Activated B cell treated with CpG ODN at 0.5 μM for 24 hours (primary cell): ENCODE measurements at regions of chr15 and their contacts with region 1.

Region 1: DNA sequence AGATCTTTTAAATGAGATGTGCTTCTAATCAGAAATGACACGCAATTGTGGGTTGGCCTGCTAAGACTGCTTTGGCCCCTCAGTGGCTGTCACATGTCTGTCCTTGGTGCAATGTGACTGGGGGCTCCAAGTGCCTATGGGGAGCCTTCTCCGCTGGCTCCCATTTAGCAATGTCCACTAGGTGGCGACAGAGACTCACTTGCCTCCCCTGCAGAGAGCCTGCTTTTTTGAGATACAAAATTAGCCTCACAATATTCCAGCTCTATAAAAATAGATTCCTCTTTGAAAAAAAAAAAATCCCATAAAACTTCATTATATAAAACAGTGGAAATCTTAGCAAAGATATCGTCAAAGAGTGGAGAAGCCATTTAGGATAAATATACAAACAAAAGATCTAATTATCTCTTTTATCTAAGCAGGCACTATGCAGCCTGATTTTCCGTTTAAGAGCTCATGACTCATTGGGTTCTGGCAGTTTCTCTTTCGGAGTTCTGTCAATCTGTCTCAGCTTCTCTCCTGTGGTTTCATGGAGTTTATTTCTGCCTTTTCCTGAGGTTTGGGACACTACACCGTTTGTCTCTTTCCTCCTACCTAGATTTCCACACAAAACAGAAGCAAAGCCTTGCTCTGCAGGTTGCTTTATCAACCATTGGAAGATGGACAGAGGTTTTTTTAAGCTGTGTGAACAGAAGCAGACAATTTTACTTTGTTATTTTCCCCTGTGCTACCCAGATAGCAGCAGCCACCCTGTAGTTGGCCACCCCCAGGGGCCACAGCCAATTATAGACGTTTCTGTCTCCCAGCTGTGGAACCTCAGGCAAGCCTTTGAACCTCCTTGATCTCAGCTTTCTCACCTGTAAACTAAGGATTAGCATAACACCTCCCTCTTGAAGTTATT is 68.4 kb upstream of the TNFAIP8L3 start:
- DNase-seq: peak; percentile 29
- ATAC-seq: peak; percentile 67
- H3K4me3 Mint-ChIP-seq: no peak overlapping the region
- H3K27ac Mint-ChIP-seq: no peak overlapping the region
- H3K4me1 Mint-ChIP-seq: peaks cover 4% of the 10 kb centered on the region
- H3K27me3 Mint-ChIP-seq: peaks cover 9% of the 10 kb centered on the region
- CTCF ChIP-seq: peak; percentile 89

Region 2: GRCh38 chr15:50496692-50497091 is 666.4 kb before region 1 on chr15:
- CTCF ChIA-PET with region 1: no interaction called
- POLR2A ChIA-PET with region 1: no interaction called
- intact Hi-C with region 1: no loop called
- DNase-seq: no peak
- ATAC-seq: no peak
- H3K4me3 Mint-ChIP-seq: no peak overlapping the region
- H3K27ac Mint-ChIP-seq: no peak overlapping the region
- H3K4me1 Mint-ChIP-seq: peaks cover 13% of the 10 kb centered on the region
- H3K27me3 Mint-ChIP-seq: no peaks in the 10 kb centered on the region
- CTCF ChIP-seq: no peak

Region 3: GRCh38 chr15:51192521-51193280 is 29.6 kb after region 1 on chr15:
- CTCF ChIA-PET with region 1: interaction called, 28 read pairs
- POLR2A ChIA-PET with region 1: no interaction called
- intact Hi-C with region 1: loop called (anchors 1 kb)
- DNase-seq: peak; percentile 57
- ATAC-seq: peak; percentile 49
- H3K4me3 Mint-ChIP-seq: no peak overlapping the region
- H3K27ac Mint-ChIP-seq: no peak overlapping the region
- H3K4me1 Mint-ChIP-seq: no peaks in the 10 kb centered on the region
- H3K27me3 Mint-ChIP-seq: peaks cover 37% of the 10 kb centered on the region
- CTCF ChIP-seq: peak; percentile 78

Region 4: DNA sequence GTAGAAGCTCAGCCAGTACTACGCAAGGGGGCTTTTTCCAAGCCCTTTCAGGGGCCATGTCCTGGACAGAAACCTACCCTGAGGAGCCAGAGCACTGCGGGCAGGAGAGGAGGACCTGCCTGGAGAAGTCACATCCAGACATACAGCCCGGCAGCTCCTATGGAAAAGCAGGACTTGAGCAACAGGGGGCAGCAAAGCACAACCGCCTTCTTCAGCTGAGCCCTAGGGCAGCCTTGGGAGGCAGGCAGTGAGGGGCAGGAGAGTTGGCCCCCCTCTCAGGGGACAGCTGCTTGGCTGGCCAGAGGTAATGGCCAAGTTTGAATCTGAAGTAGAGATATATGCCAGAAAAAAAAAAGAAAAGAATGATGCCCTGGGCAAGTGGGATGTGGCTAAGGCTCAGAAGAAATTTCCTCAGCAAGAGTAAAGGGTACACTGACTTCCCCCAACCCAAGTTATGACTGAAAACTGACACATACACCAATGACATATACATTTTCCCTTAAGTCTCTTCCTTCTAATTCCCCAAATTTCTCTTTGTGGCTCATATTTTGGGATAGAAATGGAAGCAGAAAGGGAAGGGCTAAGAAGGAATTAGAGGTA is 118.4 kb after region 1 on chr15:
- CTCF ChIA-PET with region 1: interaction called, 11 read pairs
- POLR2A ChIA-PET with region 1: no interaction called
- intact Hi-C with region 1: loop called (anchors 1 kb)
- DNase-seq: no peak
- ATAC-seq: no peak
- H3K4me3 Mint-ChIP-seq: no peak overlapping the region
- H3K27ac Mint-ChIP-seq: no peak overlapping the region
- H3K4me1 Mint-ChIP-seq: peaks cover 14% of the 10 kb centered on the region
- H3K27me3 Mint-ChIP-seq: peaks cover 16% of the 10 kb centered on the region
- CTCF ChIP-seq: no peak

Region 5: DNA sequence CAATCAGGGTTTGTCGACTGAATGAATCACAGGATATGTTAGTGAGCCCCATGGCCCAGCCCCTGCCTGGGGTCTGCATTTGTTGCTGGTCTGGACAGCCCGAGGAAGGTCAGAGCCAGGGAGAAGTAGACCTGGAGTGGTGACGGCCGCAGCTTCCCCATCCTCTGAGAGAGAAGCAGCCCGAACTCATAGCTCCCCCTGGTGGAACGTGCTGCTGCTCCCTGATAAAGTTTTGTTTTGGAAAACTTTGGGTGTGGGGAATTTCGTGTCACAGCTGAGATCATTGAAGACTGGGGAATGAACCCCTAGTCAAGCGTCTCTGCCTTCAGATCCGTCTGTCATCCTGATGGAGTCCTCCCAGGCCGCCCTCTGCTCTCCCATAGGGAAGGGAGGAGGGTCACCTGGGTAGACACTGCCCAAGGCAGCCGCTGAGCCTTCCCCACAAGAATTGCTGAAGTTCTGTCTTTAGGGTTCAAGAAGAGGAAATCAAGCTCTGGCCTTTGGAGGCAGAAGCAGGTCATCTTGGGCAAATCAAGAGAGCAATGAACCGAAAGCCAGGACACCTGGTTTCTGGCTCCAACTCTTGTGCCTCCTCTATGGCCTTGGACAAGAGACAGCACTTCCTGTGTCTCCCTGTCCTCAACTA is 238.9 kb after region 1 on chr15:
- CTCF ChIA-PET with region 1: interaction called, 8 read pairs
- POLR2A ChIA-PET with region 1: no interaction called
- intact Hi-C with region 1: loop called (anchors 1 kb)
- DNase-seq: no peak
- ATAC-seq: no peak
- H3K4me3 Mint-ChIP-seq: no peak overlapping the region
- H3K27ac Mint-ChIP-seq: no peak overlapping the region
- H3K4me1 Mint-ChIP-seq: no peaks in the 10 kb centered on the region
- H3K27me3 Mint-ChIP-seq: peaks cover 17% of the 10 kb centered on the region
- CTCF ChIP-seq: no peak

Region 6: GRCh38 chr15:51499379-51499976 is 336.4 kb after region 1 on chr15:
- CTCF ChIA-PET with region 1: interaction called, 15 read pairs
- POLR2A ChIA-PET with region 1: no interaction called
- intact Hi-C with region 1: no loop called
- DNase-seq: no peak
- ATAC-seq: no peak
- H3K4me3 Mint-ChIP-seq: no peak overlapping the region
- H3K27ac Mint-ChIP-seq: no peak overlapping the region
- H3K4me1 Mint-ChIP-seq: no peaks in the 10 kb centered on the region
- H3K27me3 Mint-ChIP-seq: no peaks in the 10 kb centered on the region
- CTCF ChIP-seq: no peak